PC-9 (cell line): ENCODE measurements at regions of chr6 and their contacts with region 1.

Region 1: GRCh38 chr6:3848925-3849605 is at the start of gene FAM50B:
- DNase-seq: peak; percentile 66 to 96
- H3K4me3 ChIP-seq: peak within 1 kb of the TSS; percentile 54
- H3K27ac ChIP-seq: peak within 1 kb of the TSS; percentile 69
- H3K4me1 ChIP-seq: peaks cover 4% of the 10 kb centered on the region; the same call in 1 of the 2 replicates
- H3K27me3 ChIP-seq: no peaks in the 10 kb centered on the region
- CTCF ChIP-seq: peak; percentile 83
- total RNA-seq, gene FAM50B: 14.3 and 16.3 TPM in 2 replicates

Region 2: DNA sequence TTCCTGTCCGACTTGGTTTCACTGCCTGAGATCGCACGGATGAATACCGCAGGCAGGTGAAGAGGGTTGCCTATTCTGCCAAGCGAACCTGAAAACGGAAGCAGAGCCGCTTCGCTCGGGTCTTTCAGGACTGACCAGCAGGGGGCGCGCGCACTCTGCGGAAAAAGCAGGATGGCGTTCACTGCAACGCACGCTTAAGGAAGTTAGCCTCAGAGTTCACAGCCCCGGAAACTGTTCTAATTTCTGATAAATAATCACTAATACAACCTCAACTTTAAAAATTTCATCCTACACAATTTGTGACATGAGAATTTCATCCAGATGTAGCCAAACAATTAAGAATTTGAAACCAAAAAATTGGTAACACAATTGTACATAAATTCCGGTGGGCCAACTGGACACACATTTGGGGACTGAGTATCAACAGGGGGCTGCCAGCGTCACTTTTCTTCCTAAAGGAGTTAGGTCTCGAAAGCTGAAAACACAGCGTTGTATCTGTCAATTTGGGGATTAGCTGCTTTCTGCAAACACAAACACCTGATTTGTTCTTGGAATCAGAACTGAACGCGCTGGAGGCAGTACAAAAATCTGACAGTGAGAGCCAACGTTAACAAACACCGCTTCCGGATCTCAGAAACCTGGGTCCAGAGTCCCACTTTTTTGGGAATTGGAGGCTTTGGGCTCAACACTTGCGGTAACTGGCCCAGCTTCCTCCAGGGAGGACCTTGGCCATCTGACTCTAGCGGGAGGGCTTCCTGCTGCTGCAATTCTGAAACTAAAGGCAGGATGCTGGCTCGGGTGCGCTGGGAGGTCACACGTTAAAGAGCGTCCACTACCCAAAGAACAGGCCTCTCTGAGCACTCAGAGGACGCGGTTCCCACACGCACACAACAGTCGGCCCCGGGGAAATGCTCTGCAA is 106.4 kb before region 1 on chr6:
- CTCF ChIA-PET with region 1: no interaction called
- POLR2A ChIA-PET with region 1: no interaction called
- intact Hi-C with region 1: loop called (anchors 2 kb)
- DNase-seq: peak; percentile 63 to 85
- H3K4me3 ChIP-seq: no peak overlapping the region
- H3K27ac ChIP-seq: no peak overlapping the region
- H3K4me1 ChIP-seq: peaks cover 5% of the 10 kb centered on the region; the same call in 1 of the 2 replicates
- H3K27me3 ChIP-seq: no peaks in the 10 kb centered on the region
- CTCF ChIP-seq: peak; percentile 82

Region 3: GRCh38 chr6:3825851-3826581 is 23.0 kb before region 1 on chr6:
- CTCF ChIA-PET with region 1: interaction called, 14 read pairs
- POLR2A ChIA-PET with region 1: interaction called, 5 read pairs
- intact Hi-C with region 1: loop called (anchors 1 kb)
- DNase-seq: peak; percentile 94
- H3K4me3 ChIP-seq: peak overlapping the region; percentile 20; the same call in 1 of the 2 replicates
- H3K27ac ChIP-seq: peak overlapping the region; percentile 87
- H3K4me1 ChIP-seq: peaks cover 50% of the 10 kb centered on the region
- H3K27me3 ChIP-seq: no peaks in the 10 kb centered on the region
- CTCF ChIP-seq: no peak

Region 4: GRCh38 chr6:3868544-3868943 is 19.5 kb after region 1 on chr6:
- CTCF ChIA-PET with region 1: no interaction called
- POLR2A ChIA-PET with region 1: no interaction called
- intact Hi-C with region 1: no loop called
- DNase-seq: no peak
- H3K4me3 ChIP-seq: no peak overlapping the region
- H3K27ac ChIP-seq: no peak overlapping the region
- H3K4me1 ChIP-seq: no peaks in the 10 kb centered on the region
- H3K27me3 ChIP-seq: no peaks in the 10 kb centered on the region
- CTCF ChIP-seq: no peak

Region 5: GRCh38 chr6:3929281-3929798 is 80.3 kb after region 1 on chr6:
- CTCF ChIA-PET with region 1: interaction called, 12 read pairs
- POLR2A ChIA-PET with region 1: interaction called, 3 read pairs
- intact Hi-C with region 1: loop called (anchors 1 kb)
- DNase-seq: no peak
- H3K4me3 ChIP-seq: no peak overlapping the region
- H3K27ac ChIP-seq: no peak overlapping the region
- H3K4me1 ChIP-seq: no peaks in the 10 kb centered on the region
- H3K27me3 ChIP-seq: no peaks in the 10 kb centered on the region
- CTCF ChIP-seq: no peak

Region 6: GRCh38 chr6:3990692-3991501 is 141.8 kb after region 1 on chr6:
- CTCF ChIA-PET with region 1: interaction called, 26 read pairs
- POLR2A ChIA-PET with region 1: no interaction called
- intact Hi-C with region 1: loop called (anchors 1 kb)
- DNase-seq: peak; percentile 53 to 80
- H3K4me3 ChIP-seq: peak overlapping the region; percentile 39; the same call in 1 of the 2 replicates
- H3K27ac ChIP-seq: peak overlapping the region; percentile 47; the same call in 1 of the 2 replicates
- H3K4me1 ChIP-seq: peaks cover 14% of the 10 kb centered on the region
- H3K27me3 ChIP-seq: no peaks in the 10 kb centered on the region
- CTCF ChIP-seq: peak; percentile 90

Region 7: DNA sequence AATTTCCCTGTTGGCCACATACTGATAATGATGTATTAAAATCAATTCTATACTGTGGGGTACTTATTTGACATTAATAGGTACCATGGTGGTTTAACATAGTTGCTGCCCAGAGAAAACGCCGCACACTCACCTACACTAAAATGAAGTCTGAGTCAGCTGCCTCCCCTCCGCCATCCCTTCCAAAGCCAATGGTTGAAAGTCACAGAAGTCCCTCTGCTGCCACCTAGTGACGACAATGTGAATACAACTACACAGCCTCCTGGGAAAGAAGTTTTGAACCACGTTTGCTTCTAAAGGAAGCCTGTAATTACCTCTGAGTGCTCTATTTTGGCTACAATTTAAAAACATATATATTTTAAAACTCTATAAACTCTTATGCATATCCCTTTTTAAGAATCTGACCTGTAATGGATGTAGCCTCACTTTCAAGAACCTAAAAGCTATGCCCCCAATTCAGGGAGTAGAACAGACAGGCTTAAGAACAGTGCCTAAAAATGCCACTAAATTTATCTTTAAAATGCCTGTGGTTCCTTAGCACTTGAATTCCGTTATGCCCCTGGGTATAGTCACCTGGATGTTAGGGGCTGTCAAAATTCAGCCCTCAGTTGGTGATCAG is 306.9 kb after region 1 on chr6:
- CTCF ChIA-PET with region 1: no interaction called
- POLR2A ChIA-PET with region 1: no interaction called
- intact Hi-C with region 1: loop called (anchors 10 kb)
- DNase-seq: peak; percentile 60 to 61
- H3K4me3 ChIP-seq: no peak overlapping the region
- H3K27ac ChIP-seq: no peak overlapping the region
- H3K4me1 ChIP-seq: no peaks in the 10 kb centered on the region
- H3K27me3 ChIP-seq: no peaks in the 10 kb centered on the region
- CTCF ChIP-seq: peak; percentile 80